ENCODE measurements at regions of chr5 and their contacts with region 1.

Region 1: DNA sequence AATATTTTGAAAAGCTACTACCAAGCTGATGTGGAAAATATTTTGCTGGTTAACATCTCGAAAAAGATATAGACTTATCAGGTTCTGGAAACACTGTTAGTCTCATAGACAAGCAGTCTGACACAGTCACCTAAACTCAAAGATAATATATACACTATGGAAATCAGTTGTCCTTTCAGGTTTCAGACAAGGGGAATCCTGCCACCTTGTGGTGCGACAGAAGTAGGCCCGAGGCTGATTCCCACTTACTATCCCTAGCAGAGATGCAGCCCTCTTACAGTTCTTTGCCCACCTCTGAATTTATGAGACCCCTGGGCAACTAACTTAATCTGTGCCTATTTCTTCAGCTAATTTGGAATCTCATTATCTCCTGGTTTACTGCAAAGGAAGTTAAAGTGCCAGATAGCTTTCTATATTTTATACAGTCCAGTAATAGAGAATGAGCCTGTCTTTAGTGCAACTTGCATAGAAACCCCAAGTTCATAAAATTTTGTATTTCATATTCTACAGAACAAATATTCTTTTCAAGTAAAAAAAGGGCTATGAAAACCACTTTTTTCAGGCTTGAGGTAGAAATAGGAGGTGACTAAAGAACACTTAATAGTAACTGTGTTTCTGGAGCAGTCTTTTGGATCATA is 16.9 kb downstream of the RAD1 start:
- DNase-seq: peak; percentile 45 to 80
- ATAC-seq: peak; percentile 70 to 86 (median 80)
- H3K4me3 ChIP-seq: no peak overlapping the region
- H3K4me3 Mint-ChIP-seq: no peak overlapping the region
- H3K27ac ChIP-seq: no peak overlapping the region
- H3K27ac Mint-ChIP-seq: no peak overlapping the region
- H3K4me1 ChIP-seq: no peaks in the 10 kb centered on the region
- H3K4me1 Mint-ChIP-seq: no peaks in the 10 kb centered on the region
- H3K27me3 ChIP-seq: no peaks in the 10 kb centered on the region
- H3K27me3 Mint-ChIP-seq: no peaks in the 10 kb centered on the region
- CTCF ChIP-seq: peak; percentile 80

Region 2: DNA sequence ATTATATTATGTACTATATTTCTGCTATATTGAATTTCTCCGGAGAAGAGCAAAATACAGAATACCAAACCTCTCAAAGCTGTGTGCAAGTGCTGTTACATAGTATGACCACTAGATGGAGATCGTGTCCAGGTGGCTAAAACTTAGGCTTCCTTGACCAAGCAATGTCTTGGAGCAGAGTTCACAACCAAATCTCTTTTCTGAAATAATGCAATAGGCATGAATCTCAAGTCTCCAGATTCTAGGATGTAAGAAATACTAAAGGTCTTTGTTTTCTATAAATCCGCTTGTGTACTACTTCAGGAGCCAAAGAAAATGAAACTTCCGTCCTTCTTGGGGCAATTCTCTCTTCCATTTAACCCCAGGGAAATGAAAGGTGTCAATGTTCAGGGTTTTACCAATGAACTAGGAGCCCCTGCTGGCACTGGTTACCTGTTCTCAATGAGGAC is 423.8 kb before region 1 on chr5:
- intact Hi-C with region 1: loop called (anchors 1 kb)
- DNase-seq: peak in 1 of 2 donors; percentile 62
- ATAC-seq: peak; percentile 72 to 83 (median 75)
- H3K4me3 ChIP-seq: no peak overlapping the region
- H3K4me3 Mint-ChIP-seq: no peak overlapping the region
- H3K27ac ChIP-seq: no peak overlapping the region
- H3K27ac Mint-ChIP-seq: no peak overlapping the region
- H3K4me1 ChIP-seq: peaks cover 6% of the 10 kb centered on the region
- H3K4me1 Mint-ChIP-seq: peaks cover 16% of the 10 kb centered on the region in 2 donors
- H3K27me3 ChIP-seq: no peaks in the 10 kb centered on the region
- H3K27me3 Mint-ChIP-seq: peaks cover 5 to 11% of the 10 kb centered on the region in 2 donors
- CTCF ChIP-seq: peak; percentile 97

Region 3: GRCh38 chr5:34522599-34523386 is 375.6 kb before region 1 on chr5:
- intact Hi-C with region 1: loop called (anchors 1 kb)
- DNase-seq: peak; percentile 29 to 76
- ATAC-seq: peak; percentile 59 to 88 (median 86)
- H3K4me3 ChIP-seq: no peak overlapping the region
- H3K4me3 Mint-ChIP-seq: no peak overlapping the region
- H3K27ac ChIP-seq: no peak overlapping the region
- H3K27ac Mint-ChIP-seq: peak overlapping the region in 1 of 2 donors; percentile 70
- H3K4me1 ChIP-seq: no peaks in the 10 kb centered on the region
- H3K4me1 Mint-ChIP-seq: peaks cover 11 to 15% of the 10 kb centered on the region in 2 donors
- H3K27me3 ChIP-seq: no peaks in the 10 kb centered on the region
- H3K27me3 Mint-ChIP-seq: no peaks in the 10 kb centered on the region
- CTCF ChIP-seq: peak; percentile 83

Region 4: GRCh38 chr5:34858790-34859189 is 39.6 kb before region 1 on chr5:
- intact Hi-C with region 1: no loop called
- DNase-seq: no peak
- ATAC-seq: no peak
- H3K4me3 ChIP-seq: no peak overlapping the region
- H3K4me3 Mint-ChIP-seq: no peak overlapping the region
- H3K27ac ChIP-seq: no peak overlapping the region
- H3K27ac Mint-ChIP-seq: no peak overlapping the region
- H3K4me1 ChIP-seq: no peaks in the 10 kb centered on the region
- H3K4me1 Mint-ChIP-seq: no peaks in the 10 kb centered on the region
- H3K27me3 ChIP-seq: no peaks in the 10 kb centered on the region
- H3K27me3 Mint-ChIP-seq: peaks cover 0 to 3% of the 10 kb centered on the region in 2 donors
- CTCF ChIP-seq: no peak

Measured in natural killer cell (primary cell).